Activated CD4-positive, alpha-beta memory T cell treated with anti-CD3 and anti-CD28 coated beads for 36 hours (primary cell): ENCODE measurements at regions of chr15 and their contacts with region 1.

Region 1: GRCh38 chr15:79896637-79897379 is at the start of gene MTHFS:
- DNase-seq: peak; percentile 83
- H3K4me3 Mint-ChIP-seq: peak within 1 kb of the TSS; percentile 97
- H3K27ac Mint-ChIP-seq: peak within 1 kb of the TSS; percentile 99
- H3K4me1 Mint-ChIP-seq: peaks cover 45% of the 10 kb centered on the region
- H3K27me3 Mint-ChIP-seq: no peaks in the 10 kb centered on the region
- total RNA-seq, gene MTHFS: 46.2 to 49.4 TPM

Region 2: DNA sequence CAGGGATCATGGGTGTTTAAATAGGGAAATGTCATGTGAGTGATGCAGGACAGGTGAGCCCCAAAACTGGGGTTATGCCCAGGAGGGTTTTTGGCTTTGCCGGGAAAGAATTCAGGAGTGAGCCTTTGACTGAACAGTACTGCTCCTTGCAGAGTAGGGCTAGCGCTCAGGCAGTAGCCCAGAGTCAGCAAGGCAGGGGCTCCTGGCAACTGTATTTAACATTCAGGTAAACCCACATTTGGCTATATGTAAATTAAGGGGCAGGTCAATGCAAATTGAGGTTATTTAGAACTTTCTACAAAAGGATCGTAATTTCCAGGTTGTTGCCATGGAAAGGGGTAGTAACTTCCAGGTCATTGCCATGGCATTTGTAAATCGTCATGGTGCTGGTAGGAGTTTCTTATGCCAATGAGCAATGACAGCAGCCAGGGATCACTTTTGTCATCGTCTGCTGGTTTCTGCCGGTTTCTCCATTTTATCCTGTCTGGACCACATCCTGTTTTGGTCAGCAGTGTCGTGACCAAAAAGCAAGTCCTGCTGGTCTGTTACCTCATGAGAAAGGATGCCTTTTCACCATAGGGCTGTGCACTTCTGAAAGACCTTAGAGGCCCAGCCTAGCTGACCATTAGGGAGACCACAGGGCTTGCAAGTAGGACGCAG is 24.3 kb before region 1 on chr15:
- CTCF ChIA-PET with region 1: no interaction called
- POLR2A ChIA-PET with region 1: no interaction called
- intact Hi-C with region 1: loop called (anchors 2 kb)
- DNase-seq: peak; percentile 62
- H3K4me3 Mint-ChIP-seq: no peak overlapping the region
- H3K27ac Mint-ChIP-seq: no peak overlapping the region
- H3K4me1 Mint-ChIP-seq: peaks cover 23% of the 10 kb centered on the region
- H3K27me3 Mint-ChIP-seq: no peaks in the 10 kb centered on the region

Region 3: DNA sequence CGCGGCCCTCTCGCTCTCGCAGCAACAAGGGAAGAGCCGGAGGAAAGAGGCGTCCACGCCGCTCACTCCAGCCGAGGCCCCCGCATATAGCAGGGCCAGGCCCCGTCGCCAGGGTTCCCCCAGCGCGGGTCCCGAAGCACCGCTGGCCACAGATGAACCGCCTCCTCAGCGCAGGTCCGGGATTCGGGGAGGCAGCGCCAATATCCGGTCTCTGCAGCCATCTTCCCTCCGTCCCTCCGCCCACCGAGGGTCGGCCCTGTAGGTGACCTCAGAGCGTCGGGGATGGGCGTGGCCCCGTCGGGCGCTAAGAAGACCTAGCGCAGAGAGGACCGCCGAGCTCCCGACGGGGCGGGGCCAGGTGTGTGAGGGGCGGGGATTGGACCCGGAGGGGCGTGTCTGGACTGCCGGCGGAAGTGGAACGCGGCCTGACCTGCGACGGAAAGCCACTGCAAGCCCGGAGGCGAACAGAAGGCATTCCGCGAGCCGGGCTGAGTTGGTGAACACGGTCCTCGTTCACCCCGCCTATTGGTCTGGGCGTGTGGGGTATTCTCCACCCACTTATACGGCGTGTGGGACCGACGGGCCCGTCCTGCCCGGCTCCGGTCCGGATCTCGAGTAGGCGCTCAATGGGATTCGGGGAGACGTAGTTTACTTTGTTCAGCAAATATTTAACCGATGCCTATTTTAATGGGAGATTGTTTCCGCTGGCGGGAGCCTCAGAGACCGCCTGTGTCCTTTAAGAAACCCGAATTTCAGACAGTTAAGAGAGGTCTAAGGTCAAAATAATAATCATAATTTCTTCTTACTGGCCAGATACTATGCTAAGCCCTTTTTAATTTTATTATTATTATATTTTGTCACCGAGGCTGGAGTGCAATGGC is 26.9 kb after region 1 on chr15:
- CTCF ChIA-PET with region 1: interaction called, 13 read pairs
- POLR2A ChIA-PET with region 1: interaction called, 51 read pairs
- intact Hi-C with region 1: loop called (anchors 1 kb)
- DNase-seq: peak; percentile 99
- H3K4me3 Mint-ChIP-seq: peak overlapping the region; percentile 93
- H3K27ac Mint-ChIP-seq: peak overlapping the region; percentile 95
- H3K4me1 Mint-ChIP-seq: peaks cover 20% of the 10 kb centered on the region
- H3K27me3 Mint-ChIP-seq: no peaks in the 10 kb centered on the region

Region 4: GRCh38 chr15:79943820-79944219 is 47.0 kb after region 1 on chr15:
- CTCF ChIA-PET with region 1: no interaction called
- POLR2A ChIA-PET with region 1: interaction called, 13 read pairs
- intact Hi-C with region 1: loop called (anchors 1 kb)
- DNase-seq: no peak
- H3K4me3 Mint-ChIP-seq: no peak overlapping the region
- H3K27ac Mint-ChIP-seq: peak overlapping the region; percentile 35
- H3K4me1 Mint-ChIP-seq: peaks cover 23% of the 10 kb centered on the region
- H3K27me3 Mint-ChIP-seq: no peaks in the 10 kb centered on the region

Region 5: GRCh38 chr15:80173022-80173759 is 276.4 kb after region 1 on chr15:
- CTCF ChIA-PET with region 1: no interaction called
- POLR2A ChIA-PET with region 1: no interaction called
- intact Hi-C with region 1: loop called (anchors 2 kb)
- DNase-seq: peak; percentile 84
- H3K4me3 Mint-ChIP-seq: no peak overlapping the region
- H3K27ac Mint-ChIP-seq: no peak overlapping the region
- H3K4me1 Mint-ChIP-seq: no peaks in the 10 kb centered on the region
- H3K27me3 Mint-ChIP-seq: no peaks in the 10 kb centered on the region

Region 6: GRCh38 chr15:80942746-80943555 is 1046.1 kb after region 1 on chr15:
- CTCF ChIA-PET with region 1: no interaction called
- POLR2A ChIA-PET with region 1: no interaction called
- intact Hi-C with region 1: no loop called
- DNase-seq: no peak
- H3K4me3 Mint-ChIP-seq: no peak overlapping the region
- H3K27ac Mint-ChIP-seq: no peak overlapping the region
- H3K4me1 Mint-ChIP-seq: no peaks in the 10 kb centered on the region
- H3K27me3 Mint-ChIP-seq: no peaks in the 10 kb centered on the region